Upper lobe of right lung (tissue), 1 donor: ENCODE measurements at regions of chr12 and their contacts with region 1.

Region 1: DNA sequence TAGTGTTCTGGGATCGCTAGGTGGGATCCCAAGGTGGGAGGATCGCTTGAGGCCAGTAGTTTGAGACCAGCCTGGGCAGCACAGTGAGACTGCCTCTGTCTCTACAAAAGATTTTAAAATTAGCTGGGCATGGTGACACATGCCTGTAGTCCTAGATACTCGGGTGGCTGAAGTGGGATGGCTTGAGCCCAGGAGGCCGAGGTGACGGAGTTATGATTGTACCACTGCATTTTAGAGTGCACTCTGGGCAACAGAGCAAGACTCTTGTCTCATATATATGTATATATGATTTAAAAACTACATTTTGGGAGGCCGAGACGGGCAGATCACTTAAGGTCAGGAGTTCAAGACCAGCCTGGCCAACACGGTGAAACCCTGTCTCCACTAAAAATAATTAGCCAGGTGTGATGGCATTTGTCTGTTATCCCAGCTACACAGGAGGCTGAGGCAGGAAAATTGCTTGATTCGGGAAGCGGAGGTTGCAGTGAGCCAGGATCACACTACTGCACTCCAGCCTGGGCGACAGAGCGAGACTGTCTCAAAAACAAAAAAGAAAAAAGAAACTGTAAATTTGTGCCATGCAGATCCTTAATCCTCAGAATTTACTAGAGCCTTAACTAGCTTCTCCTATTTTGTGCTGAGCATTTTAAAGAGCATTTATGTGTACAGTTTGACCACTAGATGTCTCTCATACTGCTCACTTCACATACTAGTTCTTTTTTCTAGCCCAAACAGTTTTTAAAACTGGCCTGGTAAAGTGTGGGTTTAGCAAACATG is 114.8 kb downstream of the MON2 start:
- DNase-seq: no peak
- ATAC-seq: peak; percentile 79
- H3K4me3 ChIP-seq: no peak overlapping the region
- H3K27ac ChIP-seq: no peak overlapping the region
- H3K4me1 ChIP-seq: no peaks in the 10 kb centered on the region
- H3K27me3 ChIP-seq: no peaks in the 10 kb centered on the region
- CTCF ChIP-seq: peak; percentile 65

Region 2: GRCh38 chr12:61854902-61855301 is 726.6 kb before region 1 on chr12:
- intact Hi-C with region 1: no loop called
- DNase-seq: no peak
- ATAC-seq: no peak
- H3K4me3 ChIP-seq: no peak overlapping the region
- H3K27ac ChIP-seq: no peak overlapping the region
- H3K4me1 ChIP-seq: no peaks in the 10 kb centered on the region
- H3K27me3 ChIP-seq: no peaks in the 10 kb centered on the region
- CTCF ChIP-seq: no peak

Region 3: GRCh38 chr12:62640910-62641448 is 59.5 kb after region 1 on chr12:
- intact Hi-C with region 1: no loop called
- DNase-seq: no peak
- ATAC-seq: no peak
- H3K4me3 ChIP-seq: no peak overlapping the region
- H3K27ac ChIP-seq: no peak overlapping the region
- H3K4me1 ChIP-seq: no peaks in the 10 kb centered on the region
- H3K27me3 ChIP-seq: no peaks in the 10 kb centered on the region
- CTCF ChIP-seq: no peak

Region 4: DNA sequence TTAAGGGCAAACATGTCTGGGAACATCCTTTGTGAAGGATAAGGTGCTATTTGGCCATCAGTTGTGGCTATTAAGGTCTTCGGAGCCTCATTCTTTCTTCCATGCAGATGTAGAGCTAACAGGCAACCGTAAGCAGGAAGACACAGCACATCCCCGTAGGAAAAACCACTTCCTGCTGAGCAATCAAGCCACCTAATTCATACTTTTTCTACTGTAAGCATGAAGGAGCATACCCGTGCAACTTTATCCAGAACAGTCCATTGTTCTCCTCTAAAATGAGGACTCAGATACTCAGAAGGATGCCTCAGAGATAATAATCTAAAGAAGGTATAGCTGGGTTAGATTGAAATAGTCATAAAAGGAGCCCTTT is 121.5 kb after region 1 on chr12:
- intact Hi-C with region 1: no loop called
- DNase-seq: no peak
- ATAC-seq: no peak
- H3K4me3 ChIP-seq: no peak overlapping the region
- H3K27ac ChIP-seq: peak overlapping the region; percentile 33
- H3K4me1 ChIP-seq: peaks cover 28% of the 10 kb centered on the region
- H3K27me3 ChIP-seq: no peaks in the 10 kb centered on the region
- CTCF ChIP-seq: no peak

Region 5: DNA sequence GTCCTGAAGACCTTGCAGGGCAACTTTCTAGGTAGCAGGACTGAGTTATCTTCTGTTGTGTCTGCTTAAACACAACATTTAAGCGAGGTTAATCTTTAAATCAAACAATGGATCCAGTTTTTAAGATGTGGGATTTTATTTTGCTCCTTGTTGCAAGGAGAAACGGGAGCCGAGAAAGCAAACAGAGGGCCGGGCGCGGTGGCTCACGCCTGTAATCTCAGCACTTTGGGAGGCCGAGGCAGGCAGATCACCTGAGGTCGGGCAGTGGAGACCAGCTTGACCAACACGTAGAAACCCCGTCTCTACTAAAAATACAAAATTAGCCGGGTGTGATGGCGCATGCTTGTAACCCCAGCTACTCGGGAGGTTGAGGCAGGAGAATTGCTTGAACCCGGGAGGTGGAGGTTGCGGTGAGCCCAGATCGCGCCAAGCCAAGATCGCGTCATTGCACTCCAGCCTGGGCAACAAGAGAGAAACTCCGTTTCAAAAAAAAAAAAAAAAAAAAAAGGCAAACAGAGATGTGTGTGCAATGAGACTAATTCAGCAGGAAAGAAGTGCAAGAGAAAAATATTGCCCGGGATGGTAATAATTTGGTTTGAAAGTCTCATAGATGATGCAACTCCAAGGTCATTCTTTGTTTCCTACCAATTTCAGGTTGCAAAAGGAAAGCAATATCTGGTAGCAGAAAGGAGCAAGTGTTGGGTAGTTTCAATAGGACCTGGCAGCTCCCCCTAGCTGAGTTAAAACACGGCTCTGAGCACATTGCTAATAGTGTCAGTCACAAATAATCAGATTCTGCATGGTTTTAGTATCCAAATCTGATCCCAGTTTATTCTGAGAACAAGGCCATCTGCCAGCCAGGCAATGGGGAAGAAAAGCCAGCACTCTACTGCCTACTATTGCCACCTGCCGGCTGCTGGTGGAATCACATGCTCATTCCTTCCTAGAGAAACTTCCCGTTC is 212.1 kb after region 1 on chr12:
- intact Hi-C with region 1: loop called (anchors 5 kb)
- DNase-seq: peak; percentile 85
- ATAC-seq: peak; percentile 98
- H3K4me3 ChIP-seq: no peak overlapping the region
- H3K27ac ChIP-seq: no peak overlapping the region
- H3K4me1 ChIP-seq: peaks cover 10% of the 10 kb centered on the region
- H3K27me3 ChIP-seq: no peaks in the 10 kb centered on the region
- CTCF ChIP-seq: peak; percentile 97